Astrocyte of the cerebellum (primary cell): ENCODE measurements at regions of chr3 and their contacts with region 1.

Region 1: DNA sequence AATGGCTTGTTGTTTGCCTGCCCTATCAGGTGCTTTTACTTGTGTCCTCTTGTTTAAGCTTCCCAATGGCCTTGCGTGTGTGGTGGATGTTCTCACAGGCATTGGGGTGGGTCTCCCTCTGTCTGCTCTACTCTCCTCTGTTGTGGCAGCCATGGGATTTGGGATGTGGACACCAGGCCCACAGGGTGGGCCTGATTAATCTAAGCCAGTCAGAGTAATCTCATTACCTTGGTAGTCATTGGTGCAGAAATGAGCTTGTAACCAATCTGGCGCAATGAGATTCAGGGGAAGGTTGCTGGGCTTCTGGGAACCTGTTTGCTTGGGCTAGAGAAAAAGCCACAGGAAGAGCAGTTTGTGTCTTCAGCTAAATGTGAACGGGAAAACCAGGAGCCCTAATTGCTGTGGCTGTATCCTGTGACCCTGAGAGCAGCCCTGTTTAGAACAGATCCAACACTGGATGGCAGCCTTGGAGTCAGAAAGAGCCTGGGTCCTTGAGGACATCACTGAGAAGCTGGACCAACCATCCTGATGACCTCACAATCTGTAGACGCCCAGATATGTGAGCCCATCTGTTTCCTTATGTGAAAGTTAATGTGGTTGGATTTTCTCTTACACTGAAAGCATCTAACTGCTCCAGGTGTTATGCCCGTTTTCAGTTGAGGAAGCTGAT is 157.3 kb upstream of the UBE2E1 start:
- DNase-seq: no peak
- H3K4me3 ChIP-seq: no peak overlapping the region
- CTCF ChIP-seq: no peak

Region 2: DNA sequence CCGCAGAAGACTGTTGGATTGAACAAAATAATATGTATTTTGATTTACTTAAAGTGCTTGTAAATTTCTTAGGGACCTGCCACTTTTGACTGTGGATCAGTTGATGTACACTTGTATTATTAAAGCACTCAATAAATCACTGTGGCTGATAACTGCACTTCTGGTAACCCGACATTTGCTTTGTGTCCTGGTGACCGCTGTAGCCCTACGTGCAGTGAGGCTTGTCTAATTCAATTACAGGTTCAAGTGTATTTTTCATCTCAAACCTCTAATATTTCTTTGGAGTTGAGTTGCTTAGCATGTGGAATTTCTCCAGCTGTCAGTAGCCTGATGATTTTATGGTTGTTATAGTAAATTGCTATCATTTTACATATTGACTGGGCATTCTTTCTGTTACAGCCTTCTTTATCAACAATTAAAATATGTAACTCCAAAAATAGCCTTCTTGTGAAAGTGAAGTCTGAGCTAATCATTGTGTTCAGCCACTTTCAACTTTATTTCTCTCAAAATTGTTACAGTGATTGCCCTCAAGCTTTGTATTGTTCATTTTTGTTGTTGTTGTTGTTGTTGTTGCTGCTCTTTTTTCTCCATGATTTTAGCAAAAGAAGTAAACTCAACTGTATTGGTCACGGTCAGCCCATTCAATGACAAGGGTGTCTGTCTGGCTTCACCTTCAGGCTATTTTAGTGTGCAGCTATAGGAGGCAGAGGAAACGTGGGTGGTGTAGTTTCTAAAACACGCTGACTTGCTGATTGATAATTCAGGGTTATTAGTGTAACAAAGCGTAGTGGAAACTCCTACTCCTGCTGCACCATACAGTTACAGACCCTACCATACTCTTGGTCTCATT is 57.8 kb before region 1 on chr3:
- in situ Hi-C with region 1: loop called (anchors 5 kb)
- DNase-seq: no peak
- H3K4me3 ChIP-seq: no peak overlapping the region
- CTCF ChIP-seq: no peak